ENCODE measurements at regions of chr5 and their contacts with region 1.

Region 1: DNA sequence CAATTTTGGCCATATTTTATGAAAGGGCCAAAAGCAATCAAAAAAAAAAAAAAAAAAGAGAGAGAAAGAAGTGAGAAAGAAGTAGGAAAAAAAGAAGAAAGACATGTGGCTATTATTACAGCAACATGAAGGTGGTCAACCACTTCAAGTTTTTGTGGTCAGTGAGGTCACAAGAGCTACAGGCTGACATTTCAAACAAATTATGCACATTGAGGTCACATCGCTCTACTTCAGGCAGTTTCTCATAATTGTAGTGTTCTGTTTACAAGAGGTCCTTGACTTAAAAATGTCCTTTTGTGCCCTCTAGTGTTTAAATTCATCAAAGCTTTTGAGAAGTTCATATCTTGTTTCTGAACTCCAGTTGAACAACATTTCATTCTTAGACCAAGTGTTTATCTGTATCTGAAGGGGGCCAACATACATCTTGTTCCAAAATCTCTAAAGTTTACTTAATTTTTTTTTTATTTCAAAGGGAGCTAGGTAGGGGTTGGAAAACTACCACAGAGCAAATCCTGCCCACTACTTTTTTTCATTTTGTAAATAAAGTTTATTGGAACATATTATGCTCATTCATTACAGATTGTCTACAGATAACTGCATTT is 513.1 kb downstream of the PDE4D start:
- DNase-seq: peak in 2 of 5 donors; percentile 77 to 78
- H3K4me3 ChIP-seq: no peak overlapping the region
- H3K27ac ChIP-seq: no peak overlapping the region
- H3K4me1 ChIP-seq: no peaks in the 10 kb centered on the region
- H3K27me3 ChIP-seq: no peaks in the 10 kb centered on the region
- CTCF ChIP-seq: peak; percentile 60

Region 2: DNA sequence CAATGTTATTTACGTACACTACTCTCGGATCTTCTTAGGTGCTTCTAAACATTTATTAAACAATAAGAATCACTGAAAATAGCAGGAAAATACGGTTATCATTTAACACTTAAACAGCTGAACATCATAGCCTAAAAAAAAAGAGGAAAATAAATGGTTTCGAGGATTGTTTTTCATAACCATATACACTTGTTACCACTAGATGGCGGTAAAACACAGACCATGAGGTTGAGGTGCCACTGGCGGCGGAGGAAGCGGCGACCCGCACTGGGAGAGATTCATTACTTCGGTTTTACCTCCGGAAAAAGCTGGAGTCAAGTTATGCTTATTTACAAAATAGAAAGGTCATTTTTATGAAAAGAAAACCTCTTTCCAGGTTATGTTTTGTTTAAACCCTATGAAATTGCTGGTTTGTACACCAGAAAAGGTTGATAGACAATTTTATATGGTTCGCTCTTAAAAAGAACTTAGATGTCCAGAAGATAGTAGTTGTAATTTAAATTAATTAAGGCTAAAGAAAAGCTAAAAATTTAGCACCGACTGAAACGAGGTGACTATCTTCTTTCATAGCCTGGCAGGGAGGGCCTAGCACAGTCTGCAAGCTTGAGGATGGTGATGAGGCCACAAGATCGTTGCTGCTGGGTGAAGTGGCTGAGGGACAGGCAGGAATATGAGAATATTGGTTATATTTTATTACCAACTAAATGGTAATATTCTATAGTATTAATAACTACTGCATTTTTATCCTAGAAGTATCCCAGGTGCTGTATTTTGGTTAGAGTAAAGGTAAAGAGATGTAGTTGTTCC is 191.8 kb before region 1 on chr5:
- intact Hi-C with region 1: loop called (anchors 5 kb)
- DNase-seq: peak; percentile 70 to 88 (median 79)
- H3K4me3 ChIP-seq: peak overlapping the region in 1 of 3 donors; percentile 29
- H3K27ac ChIP-seq: no peak overlapping the region
- H3K4me1 ChIP-seq: no peaks in the 10 kb centered on the region
- H3K27me3 ChIP-seq: no peaks in the 10 kb centered on the region
- CTCF ChIP-seq: peak; percentile 79

Region 3: DNA sequence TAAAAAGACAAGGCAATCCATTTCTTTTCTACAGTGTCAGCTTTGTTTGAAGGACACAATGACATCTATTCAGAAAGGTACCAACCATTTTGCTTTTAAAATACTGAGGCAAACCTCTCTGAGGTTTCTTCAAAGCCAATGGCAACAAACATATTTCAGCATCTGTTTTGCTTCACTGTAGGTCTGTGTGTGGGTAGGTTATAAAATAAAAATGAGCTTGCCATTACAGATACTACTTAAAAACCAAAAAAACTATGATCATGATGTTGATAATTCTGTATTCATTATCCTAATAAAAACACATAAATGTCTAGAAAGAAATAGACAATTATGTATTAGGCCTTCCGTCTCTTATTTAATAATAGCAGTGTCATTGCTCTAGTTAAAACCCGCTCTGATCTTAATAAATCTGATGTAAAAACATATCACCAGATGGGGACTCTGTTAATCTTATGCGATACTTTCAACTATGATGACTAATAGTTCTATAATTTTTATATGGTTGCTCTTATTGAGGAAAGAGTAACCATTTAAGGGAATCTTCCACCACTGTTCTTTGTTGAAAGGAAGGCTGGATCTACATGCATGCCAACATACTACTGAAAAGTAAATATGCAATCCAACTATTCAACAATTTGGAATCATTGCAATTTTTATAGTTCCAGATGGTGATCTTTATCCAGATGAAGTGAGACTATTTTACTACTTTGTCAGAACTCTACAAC is 134.1 kb before region 1 on chr5:
- intact Hi-C with region 1: no loop called
- DNase-seq: peak in 1 of 5 donors; percentile 68
- H3K4me3 ChIP-seq: no peak overlapping the region
- H3K27ac ChIP-seq: no peak overlapping the region
- H3K4me1 ChIP-seq: peaks cover 0 to 2% (median 0%) of the 10 kb centered on the region in 3 donors
- H3K27me3 ChIP-seq: no peaks in the 10 kb centered on the region
- CTCF ChIP-seq: no peak

Region 4: DNA sequence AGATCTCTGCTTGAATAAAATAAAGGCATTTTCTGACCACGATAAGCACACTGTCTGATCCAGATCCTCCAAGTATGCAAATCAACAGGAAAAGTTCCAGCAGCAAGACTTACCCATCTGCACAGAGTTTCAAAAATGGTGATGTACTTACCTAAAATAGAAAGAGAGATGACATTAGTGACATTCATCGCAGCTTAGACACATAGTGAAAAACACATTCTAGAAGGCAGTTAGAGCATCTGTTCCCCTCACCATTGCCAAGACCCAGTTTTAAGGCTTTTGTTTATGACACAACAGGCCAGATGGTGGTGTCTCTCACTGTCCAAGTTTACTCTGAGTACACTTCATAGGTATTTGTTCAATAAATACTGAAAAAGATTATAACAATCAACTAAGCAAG is 305.3 kb after region 1 on chr5:
- intact Hi-C with region 1: no loop called
- DNase-seq: no peak
- H3K4me3 ChIP-seq: no peak overlapping the region
- H3K27ac ChIP-seq: no peak overlapping the region
- H3K4me1 ChIP-seq: peaks cover 0 to 2% (median 0%) of the 10 kb centered on the region in 3 donors
- H3K27me3 ChIP-seq: no peaks in the 10 kb centered on the region
- CTCF ChIP-seq: no peak

Region 5: DNA sequence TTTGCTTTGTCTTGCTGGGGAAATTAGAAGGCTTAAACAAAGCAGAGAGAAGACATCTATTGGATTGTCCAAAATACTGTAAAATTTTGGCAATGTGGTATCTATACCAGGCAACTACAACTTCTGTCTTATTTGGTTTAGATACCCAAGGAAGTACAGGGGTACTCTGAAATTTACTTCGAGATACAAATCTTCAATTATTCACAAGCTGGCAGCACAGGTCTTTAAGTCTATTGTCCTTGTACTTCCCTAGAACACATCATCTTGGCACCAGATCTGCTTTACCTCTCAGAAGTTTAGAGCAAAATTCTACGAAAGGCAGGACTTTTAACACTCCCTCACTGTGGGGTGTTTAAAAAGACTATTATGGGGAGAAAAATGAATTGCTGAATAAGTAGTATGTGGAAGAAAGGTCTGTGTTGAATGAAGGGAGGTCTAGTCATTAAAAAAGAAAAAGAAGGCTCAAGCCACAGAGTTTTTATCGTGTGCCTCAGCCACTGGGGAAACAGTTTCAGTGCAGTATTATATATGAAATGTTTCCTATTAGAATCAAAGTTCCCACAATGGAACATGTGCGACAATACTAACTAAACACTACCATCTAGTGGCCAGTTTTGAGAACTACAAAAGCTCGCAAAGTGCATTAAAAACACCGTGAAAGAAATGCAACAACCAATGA is 419.4 kb after region 1 on chr5:
- intact Hi-C with region 1: loop called (anchors 10 kb)
- DNase-seq: peak in 2 of 5 donors; percentile 78 to 79
- H3K4me3 ChIP-seq: peak overlapping the region in 2 of 3 donors; percentile 7 to 41
- H3K27ac ChIP-seq: peak overlapping the region; percentile 0 to 4
- H3K4me1 ChIP-seq: peaks cover 0 to 7% (median 5%) of the 10 kb centered on the region in 3 donors
- H3K27me3 ChIP-seq: no peaks in the 10 kb centered on the region
- CTCF ChIP-seq: peak; percentile 70